Head of caudate nucleus (tissue), 42 donors: ENCODE measurements at regions of chr9 and their contacts with region 1.

Region 1: GRCh38 chr9:134738869-134739659 is 97.5 kb downstream of the COL5A1 start:
- DNase-seq: peak; percentile 49 to 90 (median 78)

Region 2: DNA sequence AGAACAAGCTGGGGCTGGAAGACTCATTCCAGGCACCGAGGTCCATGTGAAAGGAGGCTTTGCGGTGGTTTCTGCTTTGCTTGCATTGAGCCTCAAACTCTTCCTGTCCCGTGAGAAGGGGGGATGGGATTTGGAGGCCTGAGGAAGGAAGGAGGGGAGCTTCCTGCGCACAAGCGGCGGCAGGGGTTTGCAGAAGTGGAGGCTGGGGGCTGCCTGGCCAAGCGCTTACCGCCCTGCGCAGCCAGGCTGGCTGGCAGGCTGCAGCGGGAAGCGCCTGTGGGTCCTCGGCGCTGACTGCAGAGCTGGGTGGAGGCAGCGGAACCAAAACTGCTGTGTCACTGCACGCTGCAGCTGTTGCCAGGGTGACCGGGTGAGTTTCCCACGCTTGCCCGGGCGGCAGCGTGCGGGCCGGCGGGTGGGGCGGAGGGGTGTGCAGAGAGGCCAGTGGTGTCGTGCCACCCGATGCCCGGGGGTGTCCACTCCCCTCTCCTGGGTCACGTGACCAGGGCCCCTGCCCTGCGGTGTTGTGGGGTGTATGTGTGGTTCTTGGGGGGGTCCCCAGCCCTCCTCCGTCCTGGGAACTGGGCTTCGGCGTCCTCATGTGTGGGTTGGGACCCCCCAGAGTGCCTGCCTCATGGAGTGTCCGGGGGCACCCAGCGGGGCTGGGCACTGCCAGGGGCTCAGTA is 331.8 kb before region 1 on chr9:
- intact Hi-C with region 1: no loop called
- DNase-seq: peak; percentile 83 to 97 (median 93)

Region 3: GRCh38 chr9:134455934-134456739 is 282.9 kb before region 1 on chr9:
- intact Hi-C with region 1: loop called (anchors 10 kb)
- DNase-seq: peak in 13 of 42 donors; percentile 25 to 60 (median 50)

Region 4: DNA sequence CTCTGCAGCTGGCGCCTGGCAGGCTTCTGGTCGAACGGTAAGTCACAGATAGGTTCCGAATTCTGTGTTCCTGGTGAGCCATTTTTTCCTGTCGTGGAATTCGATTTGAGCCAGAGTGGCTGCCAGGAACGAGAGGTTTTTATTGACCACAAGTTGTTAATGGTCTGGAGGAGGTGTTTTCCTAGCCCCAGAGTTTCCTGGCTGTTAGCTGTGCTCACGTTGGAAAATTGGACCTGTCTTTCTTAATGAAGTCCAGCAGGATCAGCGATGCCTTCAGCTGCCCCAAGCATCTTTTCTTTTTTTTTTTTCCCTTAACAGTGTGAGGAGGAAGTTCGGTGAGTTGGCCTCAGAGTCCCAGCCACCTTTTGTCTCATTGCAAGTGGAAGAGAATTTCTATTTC is 34.6 kb before region 1 on chr9:
- intact Hi-C with region 1: loop called (anchors 5 kb)
- DNase-seq: no peak